ENCODE measurements at regions of chr3 and their contacts with region 1.

Region 1: GRCh38 chr3:141360888-141361598 is 7.3 kb upstream of the ZBTB38 start:
- DNase-seq: no peak
- H3K4me3 Mint-ChIP-seq: no peak overlapping the region
- H3K27ac Mint-ChIP-seq: no peak overlapping the region
- H3K4me1 Mint-ChIP-seq: peaks cover 8% of the 10 kb centered on the region
- H3K27me3 Mint-ChIP-seq: no peaks in the 10 kb centered on the region

Region 2: GRCh38 chr3:141243271-141243707 is 117.8 kb before region 1 on chr3:
- CTCF ChIA-PET with region 1: no interaction called
- intact Hi-C with region 1: no loop called
- DNase-seq: peak; percentile 86
- H3K4me3 Mint-ChIP-seq: peak overlapping the region; percentile 61
- H3K27ac Mint-ChIP-seq: peak overlapping the region; percentile 59
- H3K4me1 Mint-ChIP-seq: peaks cover 45% of the 10 kb centered on the region
- H3K27me3 Mint-ChIP-seq: no peaks in the 10 kb centered on the region

Region 3: GRCh38 chr3:141303481-141304223 is 57.4 kb before region 1 on chr3:
- CTCF ChIA-PET with region 1: interaction called, 10 read pairs
- intact Hi-C with region 1: loop called (anchors 1 kb)
- DNase-seq: peak; percentile 85
- H3K4me3 Mint-ChIP-seq: no peak overlapping the region
- H3K27ac Mint-ChIP-seq: no peak overlapping the region
- H3K4me1 Mint-ChIP-seq: peaks cover 55% of the 10 kb centered on the region
- H3K27me3 Mint-ChIP-seq: no peaks in the 10 kb centered on the region

Region 4: DNA sequence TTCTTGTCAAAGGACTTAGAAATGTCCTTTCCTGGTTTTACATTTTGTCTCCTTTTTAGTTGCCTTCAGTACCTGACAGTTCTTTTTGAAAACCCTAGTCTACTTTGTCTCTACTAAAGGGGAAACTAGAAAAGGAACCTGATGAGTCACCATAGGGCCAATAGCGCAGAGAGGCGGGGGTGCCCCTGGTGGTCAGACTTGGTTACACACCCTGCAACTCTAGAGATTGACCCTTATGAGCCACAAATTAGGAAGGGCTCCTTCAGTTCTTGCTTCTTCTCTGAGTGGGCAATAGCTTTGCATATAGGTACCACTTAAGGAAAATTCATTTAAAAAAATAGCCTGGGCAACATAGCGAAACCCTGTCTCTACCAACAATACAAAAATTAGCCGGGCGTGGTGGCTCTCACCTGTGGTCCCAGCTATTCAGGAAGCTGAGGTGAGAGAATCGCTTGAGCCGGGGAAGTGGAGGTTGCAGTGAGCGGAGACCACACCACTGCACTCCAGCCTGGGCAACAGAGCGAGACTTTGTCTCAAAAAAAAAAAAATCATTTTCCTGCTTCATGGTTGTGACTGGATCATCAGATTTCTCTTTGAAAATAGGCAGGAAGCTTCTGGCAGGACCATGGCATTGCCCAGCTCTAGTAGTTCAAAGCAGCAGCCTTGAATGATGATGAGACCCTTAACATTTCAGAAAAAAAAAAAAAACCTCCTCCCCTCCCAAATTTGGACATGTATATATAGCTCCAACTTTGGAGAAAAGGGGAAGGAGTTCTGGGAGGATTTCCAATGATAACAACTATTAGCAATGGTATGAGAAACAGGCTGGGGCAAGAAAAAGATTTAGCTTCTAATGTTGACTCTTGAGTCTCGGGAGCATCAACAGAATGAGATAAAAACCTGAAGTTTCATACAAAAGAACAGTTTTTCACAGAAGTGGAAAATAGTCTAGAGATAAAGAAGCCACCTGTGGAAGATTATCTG is 80.6 kb after region 1 on chr3:
- CTCF ChIA-PET with region 1: interaction called, 38 read pairs
- intact Hi-C with region 1: loop called (anchors 1 kb)
- DNase-seq: peak; percentile 91
- H3K4me3 Mint-ChIP-seq: no peak overlapping the region
- H3K27ac Mint-ChIP-seq: peak overlapping the region; percentile 73
- H3K4me1 Mint-ChIP-seq: peaks cover 23% of the 10 kb centered on the region
- H3K27me3 Mint-ChIP-seq: no peaks in the 10 kb centered on the region

Region 5: GRCh38 chr3:141575879-141576743 is 215.1 kb after region 1 on chr3:
- CTCF ChIA-PET with region 1: interaction called, 4 read pairs
- intact Hi-C with region 1: loop called (anchors 5 kb)
- DNase-seq: no peak
- H3K4me3 Mint-ChIP-seq: no peak overlapping the region
- H3K27ac Mint-ChIP-seq: peak overlapping the region; percentile 63
- H3K4me1 Mint-ChIP-seq: peaks cover 14% of the 10 kb centered on the region
- H3K27me3 Mint-ChIP-seq: no peaks in the 10 kb centered on the region

Region 6: GRCh38 chr3:141644931-141645330 is 283.9 kb after region 1 on chr3:
- CTCF ChIA-PET with region 1: interaction called, 3 read pairs
- intact Hi-C with region 1: loop called (anchors 10 kb)
- DNase-seq: peak; percentile 86
- H3K4me3 Mint-ChIP-seq: no peak overlapping the region
- H3K27ac Mint-ChIP-seq: no peak overlapping the region
- H3K4me1 Mint-ChIP-seq: peaks cover 3% of the 10 kb centered on the region
- H3K27me3 Mint-ChIP-seq: no peaks in the 10 kb centered on the region